Activated CD4-positive, alpha-beta T cell treated with anti-CD3 and anti-CD28 coated beads, Interleukin-2, amount 10 ng/mL, durations not matched to agents 7 days and 5 days (primary cell): ENCODE measurements at regions of chr1 and their contacts with region 1.

Region 1: DNA sequence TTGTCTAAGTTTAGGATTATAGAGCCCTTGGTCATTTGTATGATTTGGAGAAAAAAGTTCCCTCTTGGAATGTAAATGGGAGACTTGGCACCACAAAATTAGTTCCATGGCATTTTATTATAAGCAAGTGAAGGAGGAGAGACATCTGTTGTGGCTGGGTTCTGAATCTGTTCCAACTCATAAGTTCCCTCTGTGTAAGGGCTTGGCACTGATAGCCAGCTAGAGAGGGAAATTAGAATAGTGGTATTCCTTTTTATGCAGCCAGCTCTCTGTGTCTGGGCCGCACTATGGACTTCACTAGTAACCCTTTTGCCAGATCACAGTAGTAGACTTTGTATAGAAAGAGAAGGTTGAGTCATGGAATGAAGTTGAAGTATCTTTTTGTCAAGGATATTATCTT is 31.1 kb downstream of the GNAI3 start:
- DNase-seq: no peak
- H3K4me3 Mint-ChIP-seq: no peak overlapping the region
- H3K27ac Mint-ChIP-seq: no peak overlapping the region
- H3K4me1 Mint-ChIP-seq: no peaks in the 10 kb centered on the region
- H3K27me3 Mint-ChIP-seq: no peaks in the 10 kb centered on the region

Region 2: GRCh38 chr1:109426278-109427170 is 153.0 kb before region 1 on chr1 and contains the start of gene PSMA5:
- CTCF ChIA-PET with region 1: no interaction called
- POLR2A ChIA-PET with region 1: no interaction called
- DNase-seq: peak; percentile 98
- H3K4me3 Mint-ChIP-seq: peak within 1 kb of the TSS; percentile 94
- H3K27ac Mint-ChIP-seq: peak within 1 kb of the TSS; percentile 97
- H3K4me1 Mint-ChIP-seq: peaks cover 39% of the 10 kb centered on the region
- H3K27me3 Mint-ChIP-seq: no peaks in the 10 kb centered on the region
- total RNA-seq, gene PSMA5: 157 to 174 TPM

Region 3: DNA sequence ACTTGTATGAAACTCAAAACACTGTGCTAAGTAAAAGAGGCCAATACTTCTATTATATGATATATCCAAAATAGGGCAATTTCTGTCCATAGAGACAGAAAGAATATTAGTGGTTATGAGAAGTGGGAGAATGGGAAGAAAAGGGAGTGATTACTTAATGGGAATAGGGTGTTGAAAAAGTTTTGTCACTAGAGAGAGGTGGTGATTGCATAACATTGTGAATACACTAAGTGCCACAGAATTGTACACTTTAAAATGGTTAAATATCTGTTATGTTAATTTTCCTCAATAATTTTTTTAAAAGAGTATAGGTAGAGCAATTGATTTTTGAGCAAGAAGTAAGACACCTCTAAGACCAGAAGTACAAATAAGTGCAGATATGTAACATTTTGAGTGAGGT is 10.2 kb after region 1 on chr1:
- CTCF ChIA-PET with region 1: interaction called, 12 read pairs
- POLR2A ChIA-PET with region 1: no interaction called
- DNase-seq: no peak
- H3K4me3 Mint-ChIP-seq: no peak overlapping the region
- H3K27ac Mint-ChIP-seq: no peak overlapping the region
- H3K4me1 Mint-ChIP-seq: no peaks in the 10 kb centered on the region
- H3K27me3 Mint-ChIP-seq: no peaks in the 10 kb centered on the region